Activated T-helper 2 cell treated with anti-CD3 and anti-CD28 coated beads, Interferon-gamma antibody, Interleukin-2, Interleukin-4, amounts not matched to agents 10 μg/mL and 5 μg/mL and 100 μg/mL, durations not matched to agents 14 hours and 24 hours and 36 hours (primary cell): ENCODE measurements at regions of chr9 and their contacts with region 1.

Region 1: DNA sequence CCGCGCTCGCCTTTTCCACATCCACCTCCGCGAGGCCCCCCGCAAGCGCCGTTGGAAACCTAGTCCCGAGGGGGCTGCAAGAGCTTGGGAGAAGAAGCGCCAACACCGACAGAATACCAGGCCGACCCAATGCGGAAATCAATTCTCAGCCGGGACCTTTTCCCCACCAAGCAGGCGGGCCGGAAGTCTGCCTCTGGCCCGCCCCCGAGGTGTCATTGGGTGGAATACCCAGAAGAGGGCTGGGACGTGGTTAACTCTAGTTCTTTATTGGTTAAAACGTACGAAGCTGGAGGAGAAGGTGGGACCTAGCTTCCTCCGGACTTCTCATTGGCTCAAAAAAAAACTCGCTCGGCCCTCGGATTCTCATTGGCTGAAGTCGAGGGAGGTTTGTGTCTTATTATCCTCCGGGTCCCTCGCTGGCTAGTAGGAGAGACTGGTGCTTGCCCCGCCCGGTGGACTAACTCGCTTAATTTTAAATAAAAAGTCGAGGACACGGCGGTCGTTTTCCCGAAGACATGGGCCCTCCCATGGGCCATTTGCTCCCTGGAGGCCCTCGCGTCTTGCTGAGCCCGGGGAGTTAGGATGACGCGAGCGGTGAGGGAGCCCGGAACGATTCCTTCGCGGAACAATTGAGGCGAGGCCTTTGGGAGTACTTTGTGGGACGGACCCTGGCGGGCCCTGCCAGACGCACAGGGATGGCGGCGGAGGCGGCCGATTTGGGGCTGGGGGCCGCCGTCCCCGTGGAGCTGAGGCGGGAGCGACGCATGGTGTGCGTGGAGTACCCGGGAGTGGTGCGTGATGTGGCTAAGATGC is at the start of gene GTF3C5:
- DNase-seq: peak; percentile 92
- H3K4me3 Mint-ChIP-seq: peak within 1 kb of the TSS; percentile 98
- H3K27ac Mint-ChIP-seq: peak within 1 kb of the TSS; percentile 96
- H3K4me1 Mint-ChIP-seq: peaks cover 31% of the 10 kb centered on the region
- H3K27me3 Mint-ChIP-seq: no peaks in the 10 kb centered on the region
- total RNA-seq, gene GTF3C5: 81.6 and 89.7 TPM in 2 replicates

Region 2: DNA sequence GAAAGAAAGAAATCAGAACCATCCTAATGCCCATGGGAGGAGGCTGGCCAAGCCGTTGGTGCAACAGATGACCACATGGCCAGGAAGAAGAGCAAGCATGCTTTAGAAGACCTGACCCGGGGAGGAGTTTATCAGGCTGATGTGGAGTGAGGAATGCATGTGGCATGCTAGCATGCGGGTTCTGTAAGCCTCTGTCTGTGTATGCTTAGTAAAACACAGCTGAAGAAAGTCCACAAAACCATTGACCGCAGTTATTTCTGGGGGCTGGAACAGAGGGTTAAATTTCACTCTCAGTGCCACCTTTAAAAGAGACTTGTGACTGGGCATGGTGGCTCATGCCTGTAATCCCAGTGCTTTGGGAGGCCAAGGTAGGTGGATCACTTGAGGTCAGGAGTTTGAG is 32.9 kb before region 1 on chr9:
- intact Hi-C with region 1: no loop called
- DNase-seq: no peak
- H3K4me3 Mint-ChIP-seq: no peak overlapping the region
- H3K27ac Mint-ChIP-seq: no peak overlapping the region
- H3K4me1 Mint-ChIP-seq: peaks cover 2% of the 10 kb centered on the region
- H3K27me3 Mint-ChIP-seq: peaks cover 15% of the 10 kb centered on the region

Region 3: GRCh38 chr9:133115448-133116345 is 85.2 kb after region 1 on chr9:
- intact Hi-C with region 1: loop called (anchors 5 kb)
- DNase-seq: peak; percentile 65
- H3K4me3 Mint-ChIP-seq: peak overlapping the region; percentile 54
- H3K27ac Mint-ChIP-seq: peak overlapping the region; percentile 93
- H3K4me1 Mint-ChIP-seq: peaks cover 31% of the 10 kb centered on the region
- H3K27me3 Mint-ChIP-seq: no peaks in the 10 kb centered on the region